Activated CD4-positive, alpha-beta T cell treated with anti-CD3 and anti-CD28 coated beads for 36 hours (primary cell): ENCODE measurements at regions of chr2 and their contacts with region 1.

Region 1: DNA sequence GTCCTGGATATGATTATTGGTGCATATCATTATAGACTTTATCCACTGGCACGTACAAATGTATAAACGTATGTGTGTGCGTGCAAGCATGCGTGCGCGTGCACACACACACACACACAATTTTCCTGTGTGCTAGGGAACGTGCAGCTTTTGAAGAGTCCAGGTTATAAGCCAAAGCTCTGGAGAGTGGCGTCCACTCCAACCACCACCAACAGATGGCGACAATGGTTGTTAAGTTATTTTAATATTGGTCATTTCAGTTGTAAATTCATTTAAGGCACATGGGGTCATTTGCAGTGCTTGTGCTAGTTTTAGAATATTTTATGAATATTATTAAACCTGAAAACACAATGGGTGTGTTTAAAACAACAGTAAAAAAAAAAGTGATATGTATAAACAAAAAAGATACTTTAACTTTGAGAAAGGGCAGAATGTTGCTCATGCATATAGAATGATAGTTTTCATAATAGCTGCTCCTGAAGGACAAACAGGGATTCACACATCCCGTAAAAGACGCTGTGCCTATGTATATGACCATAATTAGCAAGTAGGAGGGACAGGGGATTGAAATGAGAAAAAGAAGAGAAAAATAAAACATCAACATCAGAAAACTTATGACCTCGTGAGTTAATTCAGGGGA is 124.2 kb upstream of the ITGB6 start:
- DNase-seq: peak; percentile 71
- ATAC-seq: no peak
- H3K4me3 Mint-ChIP-seq: no peak overlapping the region
- H3K27ac Mint-ChIP-seq: peak overlapping the region; percentile 39
- H3K4me1 Mint-ChIP-seq: peaks cover 85% of the 10 kb centered on the region
- H3K27me3 Mint-ChIP-seq: no peaks in the 10 kb centered on the region

Region 2: DNA sequence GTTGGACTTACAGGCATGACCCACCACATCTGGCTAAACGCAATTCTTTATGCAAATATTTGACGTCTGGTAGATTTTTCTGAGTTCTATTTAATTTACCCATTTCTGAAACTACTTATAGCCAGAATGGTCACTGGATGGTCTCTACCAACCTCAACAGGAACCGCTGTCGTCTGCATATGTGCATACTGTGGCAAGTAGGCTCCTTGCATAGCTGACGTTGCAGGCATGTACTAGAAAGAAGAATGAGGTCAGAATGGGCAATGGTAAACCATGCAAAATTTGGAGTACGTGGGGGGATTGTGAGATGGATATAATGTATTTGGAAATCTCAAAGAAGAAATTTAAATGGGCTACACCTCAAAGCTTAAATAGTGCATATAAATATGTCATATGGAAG is 47.1 kb before region 1 on chr2:
- CTCF ChIA-PET with region 1: no interaction called
- POLR2A ChIA-PET with region 1: no interaction called
- intact Hi-C with region 1: no loop called
- DNase-seq: no peak
- ATAC-seq: no peak
- H3K4me3 Mint-ChIP-seq: no peak overlapping the region
- H3K27ac Mint-ChIP-seq: no peak overlapping the region
- H3K4me1 Mint-ChIP-seq: peaks cover 35% of the 10 kb centered on the region
- H3K27me3 Mint-ChIP-seq: no peaks in the 10 kb centered on the region

Region 3: DNA sequence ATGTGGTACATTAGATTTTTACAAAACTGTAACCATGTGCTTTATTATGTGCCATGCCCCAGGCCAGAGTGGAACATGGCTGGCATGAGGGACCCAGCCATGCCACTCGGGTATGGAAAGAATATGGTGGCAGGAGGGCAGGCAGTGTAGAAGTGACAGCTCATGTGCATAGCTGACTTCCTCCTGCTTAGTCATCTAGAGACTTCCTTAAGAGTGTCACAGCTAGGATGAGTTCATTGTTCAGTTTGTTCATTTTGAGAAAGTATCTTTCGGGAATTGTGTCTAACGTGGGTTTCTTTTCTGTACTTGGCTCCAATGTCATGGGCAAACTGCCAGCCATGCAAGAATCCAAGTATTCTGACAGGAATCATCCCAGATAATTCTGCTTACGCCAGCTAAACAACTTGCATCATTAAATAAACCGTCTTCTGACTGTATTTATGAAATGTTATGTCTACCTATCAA is 29.9 kb before region 1 on chr2:
- CTCF ChIA-PET with region 1: interaction called, 12 read pairs
- POLR2A ChIA-PET with region 1: no interaction called
- intact Hi-C with region 1: loop called in 1 of 2 experiments (anchors 1 kb)
- DNase-seq: peak; percentile 69
- ATAC-seq: peak; percentile 93
- H3K4me3 Mint-ChIP-seq: no peak overlapping the region
- H3K27ac Mint-ChIP-seq: peak overlapping the region; percentile 88
- H3K4me1 Mint-ChIP-seq: peaks cover 86% of the 10 kb centered on the region
- H3K27me3 Mint-ChIP-seq: no peaks in the 10 kb centered on the region

Region 4: DNA sequence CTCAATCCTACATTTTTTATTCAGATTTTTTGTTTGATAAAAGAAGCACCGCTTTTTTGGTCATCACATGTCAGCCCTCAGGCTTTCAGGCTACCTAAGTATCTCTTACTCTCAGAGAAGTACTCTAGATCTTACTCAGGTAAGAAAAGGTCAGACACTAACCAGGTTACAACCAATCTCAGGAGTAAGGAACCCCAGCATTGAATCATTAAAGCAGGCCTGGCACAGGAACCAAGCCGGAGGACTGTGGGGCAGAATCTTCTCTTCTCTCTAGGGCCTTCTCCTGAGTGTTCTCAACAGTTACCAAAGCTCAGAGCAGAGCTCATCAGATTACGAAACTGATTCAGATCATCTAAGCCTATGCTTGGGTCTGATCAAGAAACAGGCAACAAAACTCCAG is 141.1 kb after region 1 on chr2:
- CTCF ChIA-PET with region 1: interaction called, 3 read pairs
- POLR2A ChIA-PET with region 1: interaction called, 3 read pairs
- intact Hi-C with region 1: loop called in 1 of 2 experiments (anchors 5 kb)
- DNase-seq: peak; percentile 62
- ATAC-seq: peak; percentile 89
- H3K4me3 Mint-ChIP-seq: peak overlapping the region; percentile 2
- H3K27ac Mint-ChIP-seq: peak overlapping the region; percentile 83
- H3K4me1 Mint-ChIP-seq: peaks cover 84% of the 10 kb centered on the region
- H3K27me3 Mint-ChIP-seq: no peaks in the 10 kb centered on the region

Region 5: DNA sequence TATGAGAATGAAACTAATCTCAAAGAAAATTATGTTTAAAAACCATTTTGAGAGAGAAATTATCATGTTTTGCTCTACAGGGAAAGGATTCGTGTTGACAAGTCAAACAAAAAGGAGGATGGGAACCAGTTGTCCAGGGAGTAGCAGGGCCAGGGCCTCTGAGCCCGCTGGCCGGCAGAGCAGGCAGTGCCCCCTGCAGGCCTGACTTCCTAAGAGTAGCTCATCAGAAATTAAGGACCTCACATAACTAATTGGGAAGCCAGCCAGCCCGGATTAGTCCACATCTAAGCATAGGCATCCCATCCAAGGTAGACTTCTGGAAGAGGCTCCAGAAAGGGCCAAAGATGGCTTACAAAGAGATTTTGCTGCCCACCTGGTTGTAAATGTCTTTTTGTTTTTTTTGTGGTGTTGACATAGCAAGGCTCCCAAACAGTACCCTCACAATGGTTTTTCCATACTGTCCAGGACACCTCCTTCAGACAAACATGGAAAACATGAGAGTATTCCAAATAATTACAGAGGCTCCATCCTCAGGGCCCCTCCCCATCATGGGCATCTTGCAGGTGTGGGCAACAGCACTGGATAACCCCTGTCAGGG is 594.7 kb after region 1 on chr2:
- CTCF ChIA-PET with region 1: no interaction called
- POLR2A ChIA-PET with region 1: no interaction called
- intact Hi-C with region 1: loop called in 1 of 2 experiments (anchors 2 kb)
- DNase-seq: peak; percentile 65
- ATAC-seq: no peak
- H3K4me3 Mint-ChIP-seq: no peak overlapping the region
- H3K27ac Mint-ChIP-seq: no peak overlapping the region
- H3K4me1 Mint-ChIP-seq: no peaks in the 10 kb centered on the region
- H3K27me3 Mint-ChIP-seq: no peaks in the 10 kb centered on the region